ENCODE measurements at regions of chr15 and their contacts with region 1.

Region 1: DNA sequence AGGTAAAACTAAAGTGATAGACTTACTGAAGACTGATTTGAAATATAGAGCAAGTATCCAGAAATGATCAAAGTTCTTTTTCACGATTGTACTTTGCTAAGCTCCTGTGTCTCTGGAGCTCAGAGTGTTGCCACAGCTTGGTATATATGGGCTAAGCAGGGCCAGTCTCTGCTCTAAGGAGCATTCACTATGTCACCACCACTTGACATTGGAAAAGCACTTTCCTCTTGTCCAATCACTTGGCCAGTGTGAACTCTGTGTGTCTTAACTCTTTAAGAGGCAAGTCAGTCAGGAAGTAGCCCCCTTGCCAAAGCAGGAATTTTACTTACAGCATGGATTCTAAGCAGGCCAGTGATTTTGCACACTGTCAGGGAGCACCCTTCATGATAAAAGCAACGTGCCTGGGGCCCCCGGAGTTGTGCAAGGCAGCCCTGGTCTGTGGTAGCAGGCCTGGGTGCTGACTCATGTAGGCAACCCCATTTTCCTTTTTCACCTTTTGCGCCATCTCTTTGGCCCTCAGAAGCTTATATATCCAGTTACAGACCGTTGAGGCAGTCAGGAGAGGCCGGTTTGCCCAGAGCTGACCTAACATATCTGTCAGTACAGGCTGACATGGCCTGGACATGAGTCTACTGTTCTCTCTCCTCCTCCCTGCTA is 73.0 kb downstream of the HCN4 start:
- DNase-seq: no peak
- ATAC-seq: no peak
- H3K4me3 ChIP-seq: no peak overlapping the region
- H3K27ac ChIP-seq: no peak overlapping the region
- H3K4me1 ChIP-seq: no peaks in the 10 kb centered on the region
- H3K27me3 ChIP-seq: peaks cover 12 to 26% of the 10 kb centered on the region in 2 experiments
- CTCF ChIP-seq: no peak
- EP300 ChIP-seq: no peak
- POLR2A ChIP-seq: no peak
- RAD21 ChIP-seq: no peak

Region 2: GRCh38 chr15:73691396-73691795 is 395.6 kb after region 1 on chr15:
- CTCF ChIA-PET with region 1: no interaction called
- POLR2A ChIA-PET with region 1: no interaction called
- in situ Hi-C with region 1: loop called (anchors 5 kb)
- intact Hi-C with region 1: no loop called
- DNase-seq: peak; percentile 22 to 29 (median 25)
- ATAC-seq: peak; percentile 76
- H3K4me3 ChIP-seq: no peak overlapping the region
- H3K27ac ChIP-seq: no peak overlapping the region
- H3K4me1 ChIP-seq: peaks cover 0 to 2% of the 10 kb centered on the region in 2 experiments; a peak in 1 of 5 replicates
- H3K27me3 ChIP-seq: peaks cover 4 to 20% of the 10 kb centered on the region in 2 experiments; a peak in 4 of 5 replicates
- CTCF ChIP-seq: peak; percentile 13 to 29 (median 29); a peak in 1 of 6 replicates
- EP300 ChIP-seq: no peak
- POLR2A ChIP-seq: no peak
- RAD21 ChIP-seq: peak in 1 of 2 experiments; percentile 29; a peak in 2 of 4 replicates